Activated T-helper 1 cell treated with anti-CD3 and anti-CD28 coated beads, Interleukin-12 subunit alpha, Interleukin-12 subunit beta, Interleukin-2, Interleukin-4 antibody, amounts not matched to agents 30 ng/mL and 10 ng/mL and 1 ng/mL, durations not matched to agents 14 hours and 24 hours and 36 hours (primary cell): ENCODE measurements at regions of chr7 and their contacts with region 1.

Region 1: DNA sequence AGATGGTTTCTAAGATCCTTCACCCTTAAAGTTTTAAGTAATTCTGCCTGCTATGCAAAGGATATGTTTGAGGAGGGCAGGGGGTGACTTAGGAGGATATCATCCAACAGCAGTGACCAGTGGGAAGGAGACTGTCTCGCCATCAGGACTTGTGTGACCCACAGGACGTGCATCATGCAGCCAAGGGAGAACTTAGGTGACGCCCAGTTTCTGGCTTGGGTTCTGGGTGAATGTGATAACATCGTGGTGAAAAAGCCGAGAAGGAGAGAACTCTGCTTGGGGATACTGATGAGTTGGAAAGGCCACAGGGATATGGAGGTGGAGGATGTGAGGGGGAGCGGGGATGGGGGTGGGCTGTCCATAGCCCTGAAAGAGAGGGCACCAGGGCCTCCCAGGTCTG is 3.8 kb downstream of the WIPI2 start:
- DNase-seq: no peak
- H3K4me3 Mint-ChIP-seq: no peak overlapping the region
- H3K27ac Mint-ChIP-seq: no peak overlapping the region
- H3K4me1 Mint-ChIP-seq: peaks cover 27% of the 10 kb centered on the region
- H3K27me3 Mint-ChIP-seq: no peaks in the 10 kb centered on the region

Region 2: DNA sequence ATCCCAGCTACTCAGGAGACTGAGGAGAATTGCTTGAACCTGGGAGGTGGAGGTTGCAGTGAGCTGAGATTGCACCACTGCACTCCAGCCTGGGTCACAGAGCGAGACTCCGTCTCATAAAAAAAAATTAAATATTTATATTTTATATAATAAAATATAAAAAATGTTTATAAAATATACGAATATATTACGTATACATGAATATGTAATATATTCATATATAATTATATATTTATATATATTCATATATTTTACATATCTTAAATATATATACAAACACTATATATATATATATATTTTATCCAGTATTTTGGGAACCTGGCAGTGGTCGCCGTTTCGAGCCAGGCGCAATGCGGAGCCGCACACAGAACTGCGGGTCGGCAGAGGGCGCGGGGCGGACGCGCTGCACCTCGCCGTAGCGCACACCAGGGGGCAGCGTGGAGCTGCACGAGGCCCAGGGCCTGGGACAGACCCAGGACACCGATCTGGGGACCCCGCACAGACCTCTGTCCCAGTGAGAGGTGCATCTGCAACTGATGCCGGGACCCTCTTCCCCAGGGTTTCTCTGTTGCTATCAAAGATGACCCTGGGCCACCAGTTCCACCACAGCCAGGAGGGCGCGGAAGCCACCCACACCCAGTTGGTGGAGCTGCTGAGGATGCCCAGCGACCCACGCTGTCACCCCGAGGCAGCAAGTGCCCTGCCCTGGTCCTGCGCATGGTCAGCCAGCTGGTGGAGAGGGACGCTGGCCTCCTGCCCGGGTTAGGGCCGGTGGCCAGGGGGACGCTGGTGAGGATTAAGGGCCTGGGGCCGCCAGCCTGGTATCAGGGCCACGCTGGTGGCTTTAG is 395.8 kb before region 1 on chr7:
- intact Hi-C with region 1: loop called (anchors 10 kb)
- DNase-seq: peak; percentile 52
- H3K4me3 Mint-ChIP-seq: no peak overlapping the region
- H3K27ac Mint-ChIP-seq: no peak overlapping the region
- H3K4me1 Mint-ChIP-seq: no peaks in the 10 kb centered on the region
- H3K27me3 Mint-ChIP-seq: no peaks in the 10 kb centered on the region

Region 3: DNA sequence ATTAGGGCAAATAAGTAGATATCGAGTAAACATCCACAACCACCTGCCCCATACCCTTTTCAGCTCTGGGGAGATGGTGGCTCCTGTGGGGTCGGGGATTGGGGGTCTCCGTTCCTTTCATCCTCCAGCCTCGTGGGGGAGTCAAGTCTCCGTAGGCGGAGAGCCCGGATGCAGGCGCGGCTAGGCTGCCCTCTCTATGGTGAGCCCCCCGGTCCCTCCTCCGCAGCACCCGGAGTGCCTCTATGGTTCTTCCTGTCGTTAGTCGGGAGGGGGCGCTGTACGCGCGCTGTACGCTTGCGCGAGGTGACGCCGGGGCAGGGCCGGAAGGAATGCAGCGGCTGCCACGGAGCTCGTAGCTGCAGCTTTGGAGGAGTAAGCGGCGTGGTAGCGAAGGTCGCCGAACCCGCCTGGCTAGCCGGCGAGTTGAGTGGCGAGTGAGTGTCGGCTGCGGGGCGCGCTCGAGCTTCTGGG is 220.1 kb before region 1 on chr7:
- intact Hi-C with region 1: loop called (anchors 2 kb)
- DNase-seq: peak; percentile 92
- H3K4me3 Mint-ChIP-seq: peak overlapping the region; percentile 94
- H3K27ac Mint-ChIP-seq: peak overlapping the region; percentile 94
- H3K4me1 Mint-ChIP-seq: peaks cover 18% of the 10 kb centered on the region
- H3K27me3 Mint-ChIP-seq: no peaks in the 10 kb centered on the region

Region 4: GRCh38 chr7:5139998-5140397 is 53.9 kb before region 1 on chr7:
- intact Hi-C with region 1: loop called (anchors 5 kb)
- DNase-seq: peak; percentile 2
- H3K4me3 Mint-ChIP-seq: no peak overlapping the region
- H3K27ac Mint-ChIP-seq: no peak overlapping the region
- H3K4me1 Mint-ChIP-seq: peaks cover 12% of the 10 kb centered on the region
- H3K27me3 Mint-ChIP-seq: peaks cover 4% of the 10 kb centered on the region

Region 5: GRCh38 chr7:5237286-5237685 is 43.4 kb after region 1 on chr7:
- intact Hi-C with region 1: loop called (anchors 1 kb)
- DNase-seq: no peak
- H3K4me3 Mint-ChIP-seq: no peak overlapping the region
- H3K27ac Mint-ChIP-seq: no peak overlapping the region
- H3K4me1 Mint-ChIP-seq: peaks cover 14% of the 10 kb centered on the region
- H3K27me3 Mint-ChIP-seq: peaks cover 24% of the 10 kb centered on the region

Region 6: GRCh38 chr7:5494683-5495561 is 301.0 kb after region 1 on chr7:
- intact Hi-C with region 1: no loop called
- DNase-seq: peak; percentile 73
- H3K4me3 Mint-ChIP-seq: no peak overlapping the region
- H3K27ac Mint-ChIP-seq: no peak overlapping the region
- H3K4me1 Mint-ChIP-seq: peaks cover 12% of the 10 kb centered on the region
- H3K27me3 Mint-ChIP-seq: no peaks in the 10 kb centered on the region